Sigmoid colon (tissue), 7 donors: ENCODE measurements at regions of chr16 and their contacts with region 1.

Region 1: GRCh38 chr16:10964039-10964890 is 19.9 kb downstream of the CLEC16A start:
- DNase-seq: peak; percentile 89
- H3K4me3 ChIP-seq: no peak overlapping the region
- H3K27ac ChIP-seq: peak overlapping the region; percentile 10 to 71 (median 37)
- H3K4me1 ChIP-seq: peaks cover 0 to 25% (median 17%) of the 10 kb centered on the region in 4 donors
- H3K27me3 ChIP-seq: no peaks in the 10 kb centered on the region
- CTCF ChIP-seq: peak; percentile 91 to 95 (median 94)
- EP300 ChIP-seq: no peak
- POLR2A ChIP-seq: no peak

Region 2: DNA sequence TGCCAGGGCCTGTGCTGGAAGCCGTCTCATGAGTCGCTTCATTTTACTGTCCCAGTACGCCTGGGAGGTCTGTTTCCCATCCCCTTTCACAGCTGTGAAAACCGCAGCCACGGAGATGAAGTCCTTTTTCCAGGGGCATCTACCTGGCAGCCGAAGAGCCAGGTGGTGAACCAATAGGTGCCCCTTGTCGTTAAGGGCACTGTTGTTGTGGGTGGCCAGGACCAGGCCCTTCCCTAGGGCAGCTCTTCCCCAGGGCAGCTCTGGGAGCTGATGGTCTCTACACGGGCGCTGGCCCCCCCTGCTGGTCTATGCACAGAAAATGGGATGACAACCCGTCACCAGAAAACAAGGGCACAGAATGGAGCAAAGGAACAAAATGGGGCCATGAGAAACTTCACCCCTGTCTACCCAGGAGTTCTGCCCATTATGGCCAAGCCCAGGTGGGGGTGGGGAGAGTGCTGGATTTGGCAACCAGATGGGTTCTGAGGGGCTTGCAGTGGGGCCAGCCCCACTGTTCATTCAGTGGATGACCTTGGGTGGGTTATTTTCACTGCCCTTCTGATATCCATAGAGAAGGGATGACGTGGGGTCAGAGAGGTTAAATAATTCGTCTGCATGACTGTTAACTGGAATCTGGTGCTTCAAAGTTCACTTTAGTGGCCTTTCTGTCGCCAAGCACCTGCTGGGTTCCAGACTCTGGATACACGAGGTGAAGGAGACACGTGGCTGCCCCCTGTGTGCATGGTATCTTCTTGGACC is 392.5 kb after region 1 on chr16:
- intact Hi-C with region 1: loop called (anchors 1 kb)
- DNase-seq: peak; percentile 82
- H3K4me3 ChIP-seq: no peak overlapping the region
- H3K27ac ChIP-seq: no peak overlapping the region
- H3K4me1 ChIP-seq: peaks cover 0 to 21% (median 9%) of the 10 kb centered on the region in 4 donors
- H3K27me3 ChIP-seq: no peaks in the 10 kb centered on the region
- CTCF ChIP-seq: peak; percentile 14 to 51 (median 46)
- EP300 ChIP-seq: no peak
- POLR2A ChIP-seq: no peak